ENCODE measurements at regions of chr19 and their contacts with region 1.

Region 1: DNA sequence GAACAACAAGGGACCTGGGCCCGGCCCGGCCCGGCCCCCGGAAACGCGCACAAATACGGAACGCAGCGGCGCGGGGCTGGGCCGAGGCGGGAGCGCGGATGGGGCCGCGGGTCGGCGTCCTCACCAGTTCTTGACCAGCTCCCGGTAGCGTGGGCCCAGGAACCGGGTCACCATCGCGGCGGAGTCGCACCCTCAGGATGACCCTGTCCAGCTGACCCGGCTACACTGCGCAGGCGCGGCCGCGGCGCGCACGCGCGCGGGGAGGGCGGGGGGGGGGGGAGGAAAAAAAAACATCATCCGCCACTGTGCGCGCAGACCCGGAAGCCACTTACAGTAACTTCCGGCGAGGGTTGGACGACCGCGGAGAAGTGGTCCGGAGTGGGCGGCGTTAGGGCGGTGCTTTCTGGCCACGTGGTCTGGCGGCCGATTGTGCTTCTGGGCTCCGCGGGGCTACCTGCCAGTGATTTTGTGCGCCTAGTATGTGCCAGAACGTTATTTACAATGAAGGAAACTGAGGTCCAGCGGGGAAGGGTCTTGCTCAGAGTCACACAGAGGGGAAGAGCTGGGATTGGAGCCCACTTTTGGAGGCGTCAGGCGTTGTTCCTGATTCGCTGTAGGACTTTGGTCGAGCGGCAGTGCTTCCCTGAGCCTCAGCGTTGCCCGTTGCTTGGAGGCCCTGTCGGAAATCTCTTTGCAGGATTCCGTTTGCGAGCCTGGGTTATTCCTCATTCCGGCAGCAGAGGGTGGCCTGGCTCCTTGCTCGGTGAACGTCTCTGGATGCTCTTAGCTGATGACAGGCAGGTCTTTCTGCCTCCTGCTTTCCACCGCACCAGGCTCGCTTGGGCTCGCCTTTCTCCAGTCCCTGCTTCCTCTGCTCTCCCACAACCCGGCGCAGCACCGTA is at the start of gene UQCR11:
- DNase-seq: peak; percentile 79 to 96 (median 88)
- ATAC-seq: peak; percentile 87
- H3K4me3 ChIP-seq: peak within 1 kb of the TSS; percentile 99
- H3K4me3 Mint-ChIP-seq: peak within 1 kb of the TSS; percentile 93
- H3K27ac ChIP-seq: peak within 1 kb of the TSS; percentile 77 to 86
- H3K27ac Mint-ChIP-seq: peak within 1 kb of the TSS; percentile 97
- H3K4me1 ChIP-seq: peaks cover 77% of the 10 kb centered on the region
- H3K4me1 Mint-ChIP-seq: peaks cover 39% of the 10 kb centered on the region
- H3K27me3 ChIP-seq: no peaks in the 10 kb centered on the region
- H3K27me3 Mint-ChIP-seq: no peaks in the 10 kb centered on the region
- CTCF ChIP-seq: peak; percentile 67
- total RNA-seq, gene UQCR11: 88.9 to 93.8 TPM

Region 2: DNA sequence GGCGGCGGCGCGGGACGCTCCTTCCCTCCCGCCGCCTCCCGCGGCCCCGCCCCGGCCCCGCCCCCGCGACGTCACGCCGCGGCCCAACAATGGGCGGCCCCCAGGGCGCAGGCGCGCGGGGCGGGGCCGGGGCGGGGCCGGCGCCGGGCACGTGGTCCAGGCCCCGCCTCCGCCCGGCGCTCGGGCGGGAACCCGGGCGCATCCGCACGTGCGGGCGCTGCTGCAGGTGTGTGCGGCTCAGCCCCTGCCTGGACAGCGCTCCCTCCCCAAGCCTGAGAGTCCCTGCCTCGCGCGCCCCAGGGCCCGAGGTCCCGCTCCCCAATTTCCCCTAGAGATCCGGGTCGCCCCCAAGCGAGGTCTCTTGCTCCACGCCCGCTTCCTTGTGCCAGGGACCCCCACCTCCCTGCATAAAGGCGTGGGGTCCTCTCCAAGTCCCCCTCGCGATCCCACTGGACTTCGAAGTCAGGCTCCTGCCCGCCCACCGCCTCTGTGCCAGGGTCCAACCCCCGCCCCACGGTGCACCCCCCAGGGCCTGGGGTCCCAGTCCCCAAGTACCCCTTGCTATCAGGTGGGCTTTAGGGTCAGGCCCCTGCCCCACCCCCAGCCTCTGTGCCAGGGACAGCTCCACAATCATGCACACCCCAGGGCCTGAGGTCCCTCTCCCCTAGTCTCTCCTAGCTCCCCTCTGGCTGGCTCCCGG is 37.0 kb before region 1 on chr19 and contains the start of gene MEX3D:
- CTCF ChIA-PET with region 1: no interaction called
- POLR2A ChIA-PET with region 1: interaction called, 4 read pairs
- intact Hi-C with region 1: loop called in 1 of 2 experiments (anchors 1 kb)
- DNase-seq: peak; percentile 68 to 96 (median 83)
- ATAC-seq: peak; percentile 89
- H3K4me3 ChIP-seq: peak within 1 kb of the TSS; percentile 32
- H3K4me3 Mint-ChIP-seq: peak within 1 kb of the TSS; percentile 45
- H3K27ac ChIP-seq: no peak within 1 kb of the TSS
- H3K27ac Mint-ChIP-seq: no peak within 1 kb of the TSS
- H3K4me1 ChIP-seq: peaks cover 13% of the 10 kb centered on the region
- H3K4me1 Mint-ChIP-seq: peaks cover 4% of the 10 kb centered on the region
- H3K27me3 ChIP-seq: no peaks in the 10 kb centered on the region
- H3K27me3 Mint-ChIP-seq: peaks cover 4% of the 10 kb centered on the region
- CTCF ChIP-seq: no peak
- total RNA-seq, gene MEX3D: 1.6 to 2.3 TPM

Region 3: GRCh38 chr19:1592755-1593500 is 12.6 kb before region 1 on chr19 and contains the start of gene MBD3:
- CTCF ChIA-PET with region 1: interaction called, 10 read pairs
- POLR2A ChIA-PET with region 1: interaction called, 49 read pairs
- intact Hi-C with region 1: loop called in 1 of 2 experiments (anchors 1 kb)
- DNase-seq: peak; percentile 72 to 96 (median 86)
- ATAC-seq: peak; percentile 84
- H3K4me3 ChIP-seq: peak within 1 kb of the TSS; percentile 88
- H3K4me3 Mint-ChIP-seq: peak within 1 kb of the TSS; percentile 94
- H3K27ac ChIP-seq: peak within 1 kb of the TSS; percentile 87
- H3K27ac Mint-ChIP-seq: peak within 1 kb of the TSS; percentile 80
- H3K4me1 ChIP-seq: peaks cover 33% of the 10 kb centered on the region
- H3K4me1 Mint-ChIP-seq: peaks cover 21% of the 10 kb centered on the region
- H3K27me3 ChIP-seq: no peaks in the 10 kb centered on the region
- H3K27me3 Mint-ChIP-seq: no peaks in the 10 kb centered on the region
- CTCF ChIP-seq: no peak
- total RNA-seq, gene MBD3: 34.3 to 35.2 TPM

Region 4: DNA sequence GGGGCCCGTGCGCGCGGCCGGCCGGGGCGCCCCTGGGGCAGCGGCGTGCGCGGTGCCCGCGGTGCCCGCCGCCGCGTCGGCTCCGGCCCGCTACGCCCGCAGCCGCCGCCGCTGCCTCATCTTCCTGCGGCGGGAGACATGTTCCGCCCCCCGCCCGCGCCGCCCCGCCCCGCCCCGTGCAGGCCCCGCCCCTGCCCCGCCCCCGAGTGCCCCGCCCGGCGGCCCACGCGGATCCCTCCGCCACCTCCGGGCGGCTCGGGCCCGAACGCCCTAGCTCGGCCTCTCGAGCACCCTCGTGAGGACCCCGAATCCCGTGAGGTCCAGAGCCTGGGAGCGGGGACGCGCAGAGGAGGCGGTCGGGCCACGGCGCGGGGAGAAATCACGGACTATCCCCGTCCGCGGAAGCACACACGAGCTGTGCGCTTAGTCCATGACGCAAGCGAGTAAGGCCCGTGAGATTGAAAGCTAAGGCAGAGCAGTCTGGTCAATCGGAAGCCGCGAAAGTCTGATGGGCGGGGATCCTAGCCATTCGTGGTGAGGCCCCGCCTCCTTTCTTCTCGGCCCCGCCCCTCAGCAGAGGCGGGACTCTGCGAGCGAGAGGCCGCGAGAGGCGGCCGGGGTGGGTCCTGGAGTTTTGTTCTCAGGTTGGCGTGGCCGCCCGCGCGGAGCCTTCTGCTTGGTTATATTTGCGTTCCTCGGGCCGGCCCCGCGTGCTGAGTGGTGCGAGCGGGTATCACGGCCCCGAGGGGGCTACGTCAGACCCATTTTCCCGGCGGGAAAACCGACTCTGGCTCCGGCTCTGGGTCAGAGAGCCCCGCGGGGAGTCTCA is 47.2 kb after region 1 on chr19 and contains the start of gene TCF3:
- CTCF ChIA-PET with region 1: interaction called, 14 read pairs
- POLR2A ChIA-PET with region 1: interaction called, 78 read pairs
- intact Hi-C with region 1: loop called (anchors 1 kb)
- DNase-seq: peak; percentile 97 to 99 (median 99)
- ATAC-seq: peak; percentile 90
- H3K4me3 ChIP-seq: peak within 1 kb of the TSS; percentile 63
- H3K4me3 Mint-ChIP-seq: peak within 1 kb of the TSS; percentile 97
- H3K27ac ChIP-seq: peak within 1 kb of the TSS; percentile 99
- H3K27ac Mint-ChIP-seq: peak within 1 kb of the TSS; percentile 98
- H3K4me1 ChIP-seq: peaks cover 26% of the 10 kb centered on the region
- H3K4me1 Mint-ChIP-seq: peaks cover 14% of the 10 kb centered on the region
- H3K27me3 ChIP-seq: no peaks in the 10 kb centered on the region
- H3K27me3 Mint-ChIP-seq: peaks cover 10% of the 10 kb centered on the region
- CTCF ChIP-seq: no peak
- total RNA-seq, gene TCF3: 51.2 to 52.2 TPM

Region 5: GRCh38 chr19:1672038-1672768 is 66.7 kb after region 1 on chr19:
- CTCF ChIA-PET with region 1: interaction called, 31 read pairs
- POLR2A ChIA-PET with region 1: interaction called, 15 read pairs
- intact Hi-C with region 1: loop called (anchors 1 kb)
- DNase-seq: peak; percentile 40 to 75 (median 48)
- ATAC-seq: peak; percentile 63
- H3K4me3 ChIP-seq: no peak overlapping the region
- H3K4me3 Mint-ChIP-seq: no peak overlapping the region
- H3K27ac ChIP-seq: no peak overlapping the region
- H3K27ac Mint-ChIP-seq: no peak overlapping the region
- H3K4me1 ChIP-seq: peaks cover 26% of the 10 kb centered on the region
- H3K4me1 Mint-ChIP-seq: peaks cover 15% of the 10 kb centered on the region
- H3K27me3 ChIP-seq: peaks cover 59 to 73% of the 10 kb centered on the region in 2 experiments
- H3K27me3 Mint-ChIP-seq: peaks cover 69% of the 10 kb centered on the region
- CTCF ChIP-seq: peak; percentile 91

Region 6: GRCh38 chr19:1747285-1748114 is 142.0 kb after region 1 on chr19:
- CTCF ChIA-PET with region 1: no interaction called
- POLR2A ChIA-PET with region 1: no interaction called
- intact Hi-C with region 1: no loop called
- DNase-seq: peak in 9 of 14 experiments; percentile 11 to 57 (median 34)
- ATAC-seq: peak; percentile 61
- H3K4me3 ChIP-seq: no peak overlapping the region
- H3K4me3 Mint-ChIP-seq: no peak overlapping the region
- H3K27ac ChIP-seq: no peak overlapping the region
- H3K27ac Mint-ChIP-seq: no peak overlapping the region
- H3K4me1 ChIP-seq: peaks cover 39% of the 10 kb centered on the region
- H3K4me1 Mint-ChIP-seq: peaks cover 9% of the 10 kb centered on the region
- H3K27me3 ChIP-seq: peaks cover 76 to 82% of the 10 kb centered on the region in 2 experiments
- H3K27me3 Mint-ChIP-seq: peaks cover 62% of the 10 kb centered on the region
- CTCF ChIP-seq: no peak

Region 7: GRCh38 chr19:1767464-1767933 is 162.0 kb after region 1 on chr19:
- CTCF ChIA-PET with region 1: interaction called, 5 read pairs
- POLR2A ChIA-PET with region 1: no interaction called
- intact Hi-C with region 1: loop called (anchors 2 kb)
- DNase-seq: peak; percentile 36 to 78 (median 55)
- ATAC-seq: peak; percentile 88
- H3K4me3 ChIP-seq: no peak overlapping the region
- H3K4me3 Mint-ChIP-seq: no peak overlapping the region
- H3K27ac ChIP-seq: no peak overlapping the region
- H3K27ac Mint-ChIP-seq: no peak overlapping the region
- H3K4me1 ChIP-seq: peaks cover 9% of the 10 kb centered on the region
- H3K4me1 Mint-ChIP-seq: no peaks in the 10 kb centered on the region
- H3K27me3 ChIP-seq: peaks cover 81 to 86% of the 10 kb centered on the region in 2 experiments
- H3K27me3 Mint-ChIP-seq: peaks cover 84% of the 10 kb centered on the region
- CTCF ChIP-seq: peak; percentile 91

Region 8: GRCh38 chr19:1812469-1813196 is 207.1 kb after region 1 on chr19:
- CTCF ChIA-PET with region 1: no interaction called
- POLR2A ChIA-PET with region 1: no interaction called
- intact Hi-C with region 1: loop called in 1 of 2 experiments (anchors 5 kb)
- DNase-seq: peak; percentile 70 to 93 (median 78)
- ATAC-seq: peak; percentile 70
- H3K4me3 ChIP-seq: peak overlapping the region; percentile 81
- H3K4me3 Mint-ChIP-seq: peak overlapping the region; percentile 96
- H3K27ac ChIP-seq: peak overlapping the region in 1 of 2 donors; percentile 34
- H3K27ac Mint-ChIP-seq: peak overlapping the region; percentile 87
- H3K4me1 ChIP-seq: peaks cover 22% of the 10 kb centered on the region
- H3K4me1 Mint-ChIP-seq: peaks cover 11% of the 10 kb centered on the region
- H3K27me3 ChIP-seq: no peaks in the 10 kb centered on the region
- H3K27me3 Mint-ChIP-seq: no peaks in the 10 kb centered on the region
- CTCF ChIP-seq: peak; percentile 58